Panc1 (cell line): ENCODE measurements at regions of chr12 and their contacts with region 1.

Region 1: GRCh38 chr12:104656901-104657300 is 200.2 kb downstream of the CHST11 start:
- DNase-seq: no peak
- ATAC-seq: no peak
- H3K4me3 ChIP-seq: no peak overlapping the region
- H3K27ac ChIP-seq: no peak overlapping the region
- H3K4me1 ChIP-seq: no peaks in the 10 kb centered on the region
- H3K27me3 ChIP-seq: no peaks in the 10 kb centered on the region; the same call in 1 of the 2 replicates
- CTCF ChIP-seq: no peak

Region 2: DNA sequence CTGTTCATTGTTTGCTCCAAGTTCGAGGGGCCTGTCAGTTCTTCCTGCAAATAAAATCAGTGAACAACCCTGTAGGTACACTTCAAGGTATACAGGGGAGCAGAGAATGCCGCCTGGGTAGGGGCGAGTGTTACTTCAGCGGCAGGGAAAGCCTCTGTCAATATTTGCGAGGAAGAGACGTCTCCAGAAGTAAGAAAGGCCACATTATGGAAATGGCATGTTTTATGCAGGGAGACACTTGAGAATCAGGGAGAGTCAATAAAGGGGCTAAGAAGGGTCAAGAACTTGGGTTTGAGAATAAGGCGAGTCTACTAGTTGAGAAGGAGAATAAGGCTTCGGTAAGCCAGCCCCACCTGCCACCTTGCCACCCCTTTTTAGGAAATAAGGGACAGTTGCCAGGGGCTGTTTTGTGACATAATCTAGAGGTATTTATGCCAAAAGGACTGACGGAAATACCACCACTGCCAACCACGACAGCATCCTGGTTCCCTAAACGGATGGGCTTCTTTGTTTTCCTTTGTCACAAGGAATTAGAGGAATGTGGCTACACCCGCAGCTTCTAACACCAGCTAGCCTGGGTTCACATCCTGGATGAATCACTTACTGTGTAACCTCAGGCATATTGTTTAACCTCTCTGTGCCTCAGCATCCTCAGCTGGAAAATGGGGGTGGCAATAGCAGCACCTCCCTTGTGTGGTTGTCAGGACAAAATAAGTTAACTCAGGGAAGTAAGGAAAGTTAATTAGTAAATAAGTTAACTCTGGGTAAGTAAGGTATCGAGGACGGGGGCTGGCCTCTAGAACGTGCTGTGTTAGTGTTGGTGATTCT is 285.6 kb before region 1 on chr12:
- CTCF ChIA-PET with region 1: no interaction called
- POLR2A ChIA-PET with region 1: interaction called, 18 read pairs
- in situ Hi-C with region 1: no loop called
- intact Hi-C with region 1: no loop called
- DNase-seq: no peak
- ATAC-seq: peak; percentile 71
- H3K4me3 ChIP-seq: no peak overlapping the region
- H3K27ac ChIP-seq: 0 out of 2 replicates have a peak overlapping the region, but pooled peaks have one; percentile 49
- H3K4me1 ChIP-seq: peaks cover 8% of the 10 kb centered on the region; the same call in 1 of the 2 replicates
- H3K27me3 ChIP-seq: no peaks in the 10 kb centered on the region
- CTCF ChIP-seq: no peak